ENCODE measurements at regions of chr3 and their contacts with region 1.

Region 1: GRCh38 chr3:185983495-185984141 is 45.8 kb upstream of the TRA2B start:
- DNase-seq: peak; percentile 61
- ATAC-seq: peak; percentile 83
- H3K4me3 Mint-ChIP-seq: no peak overlapping the region
- H3K27ac Mint-ChIP-seq: no peak overlapping the region
- H3K4me1 Mint-ChIP-seq: peaks cover 4% of the 10 kb centered on the region
- H3K27me3 Mint-ChIP-seq: peaks cover 17% of the 10 kb centered on the region

Region 2: DNA sequence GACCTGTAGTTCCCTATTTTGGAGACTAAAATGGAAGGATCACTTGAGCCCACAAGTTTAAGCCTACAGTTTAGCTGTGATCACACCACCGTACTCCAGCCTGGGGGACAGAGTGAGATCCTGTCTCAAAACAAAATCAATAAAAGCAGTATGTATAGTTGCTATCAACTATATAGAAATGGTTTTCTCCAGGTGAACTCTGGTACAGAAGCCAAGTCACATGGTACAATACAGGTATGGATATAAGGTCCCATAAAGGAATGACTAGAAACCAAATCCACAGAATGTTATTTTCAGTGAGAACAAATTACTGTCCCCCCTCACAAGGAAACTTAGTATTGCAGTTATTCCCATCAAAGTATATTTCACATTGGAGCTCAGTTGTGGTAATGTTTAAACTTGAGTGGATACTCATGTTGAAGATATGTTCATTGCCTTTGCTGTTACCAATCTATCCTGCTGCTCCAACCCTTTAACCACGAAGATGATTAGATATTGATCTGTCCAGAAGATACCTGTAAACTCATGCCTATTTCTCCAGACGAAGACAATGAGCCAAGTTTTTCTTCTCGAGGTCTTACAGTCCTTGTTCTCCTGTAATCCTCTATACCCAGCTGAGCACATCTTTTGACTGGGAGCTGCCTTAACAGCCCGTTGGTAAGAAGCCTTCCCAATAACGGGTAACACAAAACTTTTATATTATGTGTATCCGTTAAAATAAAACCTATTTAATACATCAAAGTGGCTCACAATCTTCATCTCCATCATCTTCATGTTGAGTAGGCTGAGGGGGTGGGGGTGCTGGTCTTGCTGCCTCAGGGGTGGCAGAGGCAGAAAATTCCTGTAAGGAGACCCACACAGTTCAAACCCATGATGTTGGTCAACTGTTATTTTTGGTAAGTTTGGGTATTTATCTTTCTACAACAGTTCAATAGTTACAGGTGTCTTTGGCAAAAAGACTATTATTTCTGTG is 70.4 kb before region 1 on chr3:
- CTCF ChIA-PET with region 1: no interaction called
- POLR2A ChIA-PET with region 1: no interaction called
- DNase-seq: no peak
- ATAC-seq: no peak
- H3K4me3 Mint-ChIP-seq: no peak overlapping the region
- H3K27ac Mint-ChIP-seq: no peak overlapping the region
- H3K4me1 Mint-ChIP-seq: peaks cover 3% of the 10 kb centered on the region
- H3K27me3 Mint-ChIP-seq: no peaks in the 10 kb centered on the region

Region 3: DNA sequence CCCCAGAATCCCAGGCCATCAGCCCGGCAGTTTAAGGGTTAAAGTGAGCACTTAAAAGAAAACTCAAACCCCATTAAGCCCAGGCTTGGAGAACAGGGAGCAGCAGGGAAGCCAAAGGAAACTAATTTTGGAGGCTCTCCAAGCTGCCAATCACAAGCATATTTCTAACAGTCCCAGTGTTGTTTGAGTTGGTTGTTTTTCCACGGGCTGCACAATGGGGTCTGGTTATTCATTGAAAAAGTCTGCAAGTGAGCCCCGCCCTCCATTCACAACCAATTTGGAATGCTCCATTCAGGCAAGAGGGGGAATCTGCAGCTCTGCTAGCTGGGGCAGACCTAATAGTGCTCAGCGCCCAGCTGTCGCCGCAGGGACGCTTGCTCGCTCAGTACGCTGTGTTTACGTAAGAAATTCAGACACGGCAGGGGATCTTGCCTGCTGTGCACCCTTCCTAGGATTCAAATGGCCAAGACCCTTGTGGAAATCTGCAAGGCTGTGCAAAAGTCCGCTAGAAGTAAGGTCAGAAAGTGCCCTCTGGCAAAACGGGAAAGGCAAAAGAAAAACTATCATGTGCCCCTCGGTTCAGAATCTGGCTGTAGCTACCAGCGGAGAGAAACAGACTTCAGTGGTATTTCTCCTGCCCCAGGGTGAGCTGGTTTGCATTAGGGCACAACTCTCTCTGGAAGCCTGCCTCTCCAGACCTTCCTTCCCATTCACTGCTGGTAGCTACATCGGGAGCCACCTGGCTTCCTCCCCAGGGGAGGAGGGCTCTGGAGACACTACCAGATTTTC is 114.2 kb after region 1 on chr3:
- CTCF ChIA-PET with region 1: no interaction called
- POLR2A ChIA-PET with region 1: no interaction called
- DNase-seq: no peak
- ATAC-seq: peak; percentile 58
- H3K4me3 Mint-ChIP-seq: peak overlapping the region; percentile 46
- H3K27ac Mint-ChIP-seq: no peak overlapping the region
- H3K4me1 Mint-ChIP-seq: peaks cover 11% of the 10 kb centered on the region
- H3K27me3 Mint-ChIP-seq: peaks cover 78% of the 10 kb centered on the region

Region 4: DNA sequence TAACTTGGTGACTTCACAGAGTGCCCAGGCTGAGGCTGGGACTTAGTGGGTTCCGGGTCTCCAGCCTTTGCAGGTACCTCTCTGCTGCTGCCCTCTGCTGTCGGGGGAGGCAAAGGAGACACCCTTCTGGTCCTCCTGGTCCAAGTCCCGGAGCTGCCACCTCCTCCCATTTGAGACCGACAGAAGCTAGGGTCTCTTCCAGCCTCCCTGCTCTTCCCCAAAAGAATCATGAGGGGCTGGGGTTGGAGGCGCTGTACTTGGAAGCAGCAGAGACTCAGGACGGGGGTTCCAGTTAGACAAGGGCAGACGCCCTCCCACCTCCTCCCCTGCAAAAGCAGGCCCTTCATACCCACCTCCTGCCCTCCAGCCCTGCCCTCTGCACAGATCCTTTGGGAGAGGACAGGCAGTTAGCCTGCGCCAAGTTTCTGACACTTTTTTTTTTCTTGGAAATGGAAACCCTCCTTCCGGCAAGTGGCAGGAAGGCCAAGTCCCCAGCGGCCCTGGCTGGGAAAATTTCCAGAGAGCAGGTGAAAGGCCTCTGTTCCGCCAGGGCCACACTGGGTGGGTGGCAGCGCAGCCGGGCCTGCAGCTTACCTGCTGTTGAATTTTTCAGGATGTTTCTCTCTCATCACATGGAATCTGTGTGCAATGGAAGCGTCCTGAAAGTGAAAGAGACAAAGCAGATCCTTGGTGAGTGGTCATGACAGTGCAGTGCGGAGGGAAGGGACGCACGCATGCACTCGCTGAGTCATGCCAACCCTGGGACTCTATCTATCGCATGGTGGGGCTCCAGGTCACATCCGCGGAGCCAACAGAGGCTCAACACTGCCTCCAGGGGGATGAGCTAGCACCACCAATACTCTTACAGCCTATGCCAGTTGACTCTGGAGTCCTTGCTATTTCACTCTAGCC is 258.5 kb after region 1 on chr3:
- CTCF ChIA-PET with region 1: interaction called, 32 read pairs
- POLR2A ChIA-PET with region 1: interaction called, 3 read pairs
- DNase-seq: peak; percentile 80
- ATAC-seq: peak; percentile 97
- H3K4me3 Mint-ChIP-seq: no peak overlapping the region
- H3K27ac Mint-ChIP-seq: no peak overlapping the region
- H3K4me1 Mint-ChIP-seq: peaks cover 18% of the 10 kb centered on the region
- H3K27me3 Mint-ChIP-seq: peaks cover 11% of the 10 kb centered on the region